B cell (primary cell): ENCODE measurements at regions of chr2 and their contacts with region 1.

Region 1: DNA sequence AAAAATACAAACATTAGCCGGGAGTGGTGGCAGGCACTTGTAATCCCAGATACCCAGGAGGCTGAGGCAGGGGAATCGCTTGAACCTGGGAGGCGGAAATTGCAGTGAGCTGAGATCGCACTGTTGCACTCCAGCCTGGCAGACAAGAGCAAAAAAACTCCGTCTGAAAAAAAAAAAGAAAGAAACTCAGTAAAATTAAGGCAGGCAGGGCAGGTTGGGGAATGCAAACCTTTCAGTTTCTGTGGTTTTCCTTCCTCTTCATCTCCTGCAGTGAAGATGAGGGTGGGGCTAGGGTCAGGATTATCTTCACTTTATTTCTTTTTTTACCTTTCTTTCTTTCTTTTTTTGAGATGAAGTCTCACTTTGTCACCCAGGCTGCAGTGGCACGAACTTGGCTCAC is 43.2 kb upstream of the PSME4 start:
- DNase-seq: peak; percentile 25
- ATAC-seq: no peak
- H3K4me3 ChIP-seq: peak overlapping the region in 2 of 5 experiments; percentile 19 to 43
- H3K4me3 Mint-ChIP-seq: peak overlapping the region; percentile 66
- H3K27ac ChIP-seq: peak overlapping the region; percentile 41 to 66
- H3K27ac Mint-ChIP-seq: peak overlapping the region; percentile 73
- H3K4me1 ChIP-seq: peaks cover 17 to 23% of the 10 kb centered on the region in 2 donors
- H3K4me1 Mint-ChIP-seq: peaks cover 42% of the 10 kb centered on the region
- H3K27me3 ChIP-seq: no peaks in the 10 kb centered on the region
- H3K27me3 Mint-ChIP-seq: no peaks in the 10 kb centered on the region
- CTCF ChIP-seq: no peak

Region 2: GRCh38 chr2:53829273-53829979 is 184.6 kb before region 1 on chr2:
- CTCF ChIA-PET with region 1: no interaction called
- POLR2A ChIA-PET with region 1: no interaction called
- intact Hi-C with region 1: no loop called
- DNase-seq: no peak
- ATAC-seq: no peak
- H3K4me3 ChIP-seq: no peak overlapping the region
- H3K4me3 Mint-ChIP-seq: no peak overlapping the region
- H3K27ac ChIP-seq: no peak overlapping the region
- H3K27ac Mint-ChIP-seq: no peak overlapping the region
- H3K4me1 ChIP-seq: no peaks in the 10 kb centered on the region
- H3K4me1 Mint-ChIP-seq: no peaks in the 10 kb centered on the region
- H3K27me3 ChIP-seq: no peaks in the 10 kb centered on the region
- H3K27me3 Mint-ChIP-seq: no peaks in the 10 kb centered on the region
- CTCF ChIP-seq: no peak

Region 3: DNA sequence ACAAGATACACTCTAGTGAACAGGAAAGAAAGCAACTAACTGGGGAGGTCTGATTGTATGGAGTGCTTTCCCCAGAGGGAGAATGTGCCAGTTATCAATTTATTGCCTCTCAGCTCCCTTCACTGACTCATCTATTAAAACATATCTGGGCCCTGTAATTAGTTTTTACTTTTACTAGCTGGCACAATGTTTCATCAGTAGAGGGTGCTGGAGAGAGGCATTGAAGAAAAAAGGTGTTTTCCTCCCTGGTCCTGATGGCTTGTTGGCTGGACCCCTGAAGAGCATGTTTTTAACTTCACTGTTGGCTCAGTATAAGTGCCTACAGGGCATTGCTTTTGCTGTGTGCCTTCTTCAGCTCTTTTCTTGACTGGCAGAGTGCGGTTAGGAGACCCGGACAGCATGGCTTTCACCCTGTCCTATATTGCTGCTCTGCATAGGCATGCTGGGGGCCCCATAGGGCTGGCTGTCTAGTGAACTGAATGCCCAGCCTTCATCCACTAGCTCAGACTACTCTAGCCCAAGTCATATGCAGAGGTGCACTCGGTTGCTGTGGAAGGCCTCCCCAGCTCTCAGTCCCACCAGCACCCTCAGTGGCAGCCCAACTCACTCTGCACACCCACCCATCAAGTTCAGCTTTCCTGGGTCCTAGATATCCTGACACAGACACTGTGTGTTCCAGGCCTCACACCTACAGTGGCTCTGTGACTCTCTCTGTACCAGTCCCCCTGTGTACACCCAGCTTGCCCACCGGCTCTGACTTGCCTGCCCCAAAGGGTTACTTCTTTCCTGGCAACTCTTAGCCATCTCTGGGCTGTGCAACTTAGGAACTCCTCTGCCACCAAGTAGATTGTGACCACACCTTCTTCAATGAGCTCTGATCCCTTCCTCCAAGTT is 39.1 kb after region 1 on chr2:
- CTCF ChIA-PET with region 1: no interaction called
- POLR2A ChIA-PET with region 1: no interaction called
- intact Hi-C with region 1: loop called (anchors 5 kb)
- DNase-seq: peak; percentile 6
- ATAC-seq: no peak
- H3K4me3 ChIP-seq: peak overlapping the region in 1 of 5 experiments; percentile 23
- H3K4me3 Mint-ChIP-seq: peak overlapping the region; percentile 59
- H3K27ac ChIP-seq: peak overlapping the region; percentile 64 to 84
- H3K27ac Mint-ChIP-seq: peak overlapping the region; percentile 84
- H3K4me1 ChIP-seq: peaks cover 23 to 31% of the 10 kb centered on the region in 2 donors
- H3K4me1 Mint-ChIP-seq: peaks cover 35% of the 10 kb centered on the region
- H3K27me3 ChIP-seq: no peaks in the 10 kb centered on the region
- H3K27me3 Mint-ChIP-seq: no peaks in the 10 kb centered on the region
- CTCF ChIP-seq: no peak

Region 4: DNA sequence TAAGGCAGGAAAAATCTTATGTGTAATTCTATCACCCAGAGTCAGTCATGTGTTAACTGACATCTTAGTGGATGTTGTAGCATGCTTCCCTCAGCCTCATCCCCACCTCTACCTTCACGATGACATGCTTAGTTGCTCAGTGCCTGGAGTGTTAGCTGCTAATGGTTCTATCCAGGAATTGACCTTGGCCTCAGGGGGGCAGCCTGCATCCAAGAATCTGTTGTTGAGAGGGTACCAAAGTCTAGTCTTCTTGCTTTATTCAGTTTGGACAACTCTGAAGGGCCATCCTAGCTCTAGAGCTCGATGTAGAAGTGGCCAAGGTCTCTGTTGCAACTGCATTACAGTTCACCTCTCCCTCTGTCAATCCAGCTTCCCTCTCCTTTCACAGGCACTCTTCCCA is 162.6 kb after region 1 on chr2:
- CTCF ChIA-PET with region 1: no interaction called
- POLR2A ChIA-PET with region 1: no interaction called
- intact Hi-C with region 1: no loop called
- DNase-seq: no peak
- ATAC-seq: no peak
- H3K4me3 ChIP-seq: no peak overlapping the region
- H3K4me3 Mint-ChIP-seq: no peak overlapping the region
- H3K27ac ChIP-seq: no peak overlapping the region
- H3K27ac Mint-ChIP-seq: no peak overlapping the region
- H3K4me1 ChIP-seq: no peaks in the 10 kb centered on the region
- H3K4me1 Mint-ChIP-seq: no peaks in the 10 kb centered on the region
- H3K27me3 ChIP-seq: no peaks in the 10 kb centered on the region
- H3K27me3 Mint-ChIP-seq: no peaks in the 10 kb centered on the region
- CTCF ChIP-seq: no peak